ENCODE measurements at regions of chr1 and their contacts with region 1.

Region 1: DNA sequence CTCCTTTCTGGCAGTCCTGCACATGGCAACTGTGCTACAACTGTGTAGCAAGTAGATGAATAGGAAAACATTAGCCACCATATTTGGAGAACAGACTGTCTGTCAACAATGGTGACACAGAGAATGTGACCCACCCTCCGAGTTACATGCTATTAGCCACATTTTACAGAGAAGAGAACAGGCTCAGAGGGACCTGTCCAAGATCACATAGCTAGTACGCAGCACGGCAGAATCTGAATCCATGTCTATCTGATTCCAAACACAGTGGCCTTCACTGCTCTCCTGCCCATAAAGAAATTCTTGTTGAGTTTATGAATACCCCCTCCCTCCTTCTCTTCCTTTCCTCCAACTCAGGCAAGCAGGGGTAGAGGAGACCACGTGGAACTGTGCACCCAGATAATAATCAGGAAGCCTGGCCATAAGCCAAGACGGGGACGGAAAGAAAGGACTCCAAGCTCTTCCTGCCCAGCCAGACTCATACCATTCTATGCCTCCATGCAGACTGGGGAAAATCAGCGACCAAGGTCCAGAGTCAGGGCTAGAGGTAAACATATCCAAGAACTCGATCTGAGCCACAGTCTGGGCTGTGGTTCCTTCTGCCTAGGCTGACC is 78.8 kb downstream of the TRABD2B start:
- DNase-seq: peak; percentile 51
- H3K4me3 ChIP-seq: no peak overlapping the region
- H3K27ac ChIP-seq: no peak overlapping the region
- H3K4me1 ChIP-seq: peaks cover 11% of the 10 kb centered on the region
- H3K27me3 ChIP-seq: peaks cover 0 to 1% of the 10 kb centered on the region in 2 experiments
- CTCF ChIP-seq: no peak
- POLR2A ChIP-seq: no peak

Region 2: GRCh38 chr1:47906009-47906432 is 12.3 kb before region 1 on chr1:
- CTCF ChIA-PET with region 1: interaction called, 6 read pairs
- POLR2A ChIA-PET with region 1: no interaction called
- dilution Hi-C with region 1: no loop called
- intact Hi-C with region 1: loop called (anchors 1 kb)
- DNase-seq: peak; percentile 93
- H3K4me3 ChIP-seq: no peak overlapping the region
- H3K27ac ChIP-seq: peak overlapping the region; percentile 35
- H3K4me1 ChIP-seq: peaks cover 23% of the 10 kb centered on the region
- H3K27me3 ChIP-seq: no peaks in the 10 kb centered on the region
- CTCF ChIP-seq: no peak
- POLR2A ChIP-seq: no peak

Region 3: DNA sequence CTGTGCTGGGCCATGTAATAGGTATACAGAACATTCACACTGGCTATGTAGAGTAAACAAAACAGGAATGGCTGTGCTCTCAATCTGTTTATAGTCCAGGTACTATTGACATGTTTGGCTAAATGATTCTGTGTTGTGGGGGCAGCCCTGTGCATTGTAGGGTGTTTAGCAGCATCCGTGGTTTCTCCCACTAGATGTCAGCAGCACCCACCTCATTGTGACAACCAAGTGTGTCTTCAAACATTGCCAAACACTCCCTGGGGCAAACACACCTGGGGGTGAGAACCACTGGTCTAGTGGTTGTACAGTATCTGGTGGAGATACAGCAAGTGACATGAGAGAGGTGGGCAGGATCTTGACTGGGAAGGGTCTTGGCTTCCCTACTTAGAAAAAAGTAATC is 634.1 kb after region 1 on chr1:
- CTCF ChIA-PET with region 1: no interaction called
- POLR2A ChIA-PET with region 1: no interaction called
- dilution Hi-C with region 1: no loop called
- intact Hi-C with region 1: no loop called
- DNase-seq: no peak
- H3K4me3 ChIP-seq: no peak overlapping the region
- H3K27ac ChIP-seq: no peak overlapping the region
- H3K4me1 ChIP-seq: no peaks in the 10 kb centered on the region
- H3K27me3 ChIP-seq: no peaks in the 10 kb centered on the region
- CTCF ChIP-seq: no peak
- POLR2A ChIP-seq: no peak